ENCODE measurements at regions of chr6 and their contacts with region 1.

Region 1: DNA sequence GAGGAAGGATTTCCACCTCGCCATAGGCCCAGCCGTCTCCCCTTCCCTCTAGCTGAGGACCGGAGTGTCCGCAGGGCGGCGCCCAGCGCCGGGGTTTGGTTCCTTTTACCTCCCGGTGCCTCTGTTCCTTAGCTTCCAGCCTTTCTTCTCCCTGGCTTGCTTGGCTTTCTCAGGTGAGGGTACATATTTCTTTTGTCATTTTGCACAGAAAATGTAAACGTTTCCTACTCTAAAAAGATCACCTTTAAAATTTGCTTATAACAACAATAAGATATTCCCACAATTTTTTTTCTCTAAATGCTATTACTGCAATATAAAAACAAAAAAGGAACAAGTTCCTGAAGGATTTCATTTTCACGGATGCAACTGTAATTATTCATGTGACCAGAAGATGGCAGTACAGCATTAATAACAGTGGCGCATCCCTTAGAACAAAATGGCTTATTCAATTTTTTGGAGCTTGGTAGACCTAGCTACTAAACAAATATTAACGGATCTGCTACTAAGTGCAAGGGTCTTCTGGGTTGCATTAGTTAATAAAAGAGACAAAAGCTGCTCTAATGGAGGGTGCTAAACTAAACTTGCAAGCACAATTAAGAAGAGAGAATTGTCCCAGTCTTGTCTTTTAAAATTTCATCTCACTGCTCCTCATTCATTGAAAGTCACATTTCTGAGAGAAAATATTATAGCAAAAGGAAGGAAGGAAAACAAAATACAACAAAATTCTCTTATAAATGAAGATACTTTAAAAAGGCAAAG is 172.9 kb downstream of the ADGRG6 start:
- DNase-seq: peak; percentile 47
- H3K4me3 ChIP-seq: peak overlapping the region; percentile 12 to 37; a peak in 2 of 4 replicates
- H3K27ac ChIP-seq: peak overlapping the region; percentile 19 to 66; a peak in 3 of 4 replicates
- H3K4me1 ChIP-seq: peaks cover 0 to 2% of the 10 kb centered on the region in 2 experiments; a peak in 2 of 4 replicates
- H3K27me3 ChIP-seq: no peaks in the 10 kb centered on the region
- CTCF ChIP-seq: peak; percentile 76
- EP300 ChIP-seq: no peak
- RAD21 ChIP-seq: peak; percentile 90

Region 2: GRCh38 chr6:142313284-142313683 is 161.4 kb before region 1 on chr6:
- CTCF ChIA-PET with region 1: no interaction called
- POLR2A ChIA-PET with region 1: no interaction called
- DNase-seq: no peak
- H3K4me3 ChIP-seq: no peak overlapping the region
- H3K27ac ChIP-seq: peak overlapping the region; percentile 76 to 92
- H3K4me1 ChIP-seq: no peaks in the 10 kb centered on the region; a peak in 1 of 4 replicates
- H3K27me3 ChIP-seq: no peaks in the 10 kb centered on the region
- CTCF ChIP-seq: no peak
- EP300 ChIP-seq: 0 out of 4 replicates have a peak, but pooled peaks of 1 of the 2 experiments have one; percentile 28
- RAD21 ChIP-seq: no peak

Region 3: GRCh38 chr6:142459271-142459670 is 15.4 kb before region 1 on chr6:
- CTCF ChIA-PET with region 1: interaction called, 12 read pairs
- POLR2A ChIA-PET with region 1: no interaction called
- DNase-seq: no peak
- H3K4me3 ChIP-seq: no peak overlapping the region
- H3K27ac ChIP-seq: peak overlapping the region in 1 of 2 experiments; percentile 28; a peak in 1 of 4 replicates
- H3K4me1 ChIP-seq: no peaks in the 10 kb centered on the region
- H3K27me3 ChIP-seq: no peaks in the 10 kb centered on the region
- CTCF ChIP-seq: no peak
- EP300 ChIP-seq: no peak
- RAD21 ChIP-seq: no peak

Region 4: DNA sequence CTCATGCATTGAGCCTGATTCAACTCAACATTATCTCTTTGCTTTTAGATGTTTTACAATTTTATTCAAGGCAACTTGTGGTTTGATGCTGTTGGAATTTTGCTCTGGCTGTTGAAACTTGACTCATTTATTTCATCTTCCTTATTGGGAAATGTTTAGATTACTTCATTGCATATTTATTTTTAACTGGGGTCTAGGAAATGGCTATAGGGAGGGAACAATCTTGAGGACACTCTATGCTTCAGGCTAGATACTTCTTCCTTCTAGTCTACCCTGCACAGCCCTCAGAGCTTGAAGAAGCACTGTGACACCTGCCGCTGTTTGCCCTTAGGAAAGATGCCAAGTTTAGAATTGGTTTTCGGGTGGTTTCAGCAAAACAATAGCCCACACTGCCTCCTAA is 10.5 kb after region 1 on chr6:
- CTCF ChIA-PET with region 1: interaction called, 30 read pairs
- POLR2A ChIA-PET with region 1: no interaction called
- DNase-seq: no peak
- H3K4me3 ChIP-seq: no peak overlapping the region
- H3K27ac ChIP-seq: no peak overlapping the region
- H3K4me1 ChIP-seq: no peaks in the 10 kb centered on the region
- H3K27me3 ChIP-seq: no peaks in the 10 kb centered on the region
- CTCF ChIP-seq: no peak
- EP300 ChIP-seq: no peak
- RAD21 ChIP-seq: no peak

Region 5: DNA sequence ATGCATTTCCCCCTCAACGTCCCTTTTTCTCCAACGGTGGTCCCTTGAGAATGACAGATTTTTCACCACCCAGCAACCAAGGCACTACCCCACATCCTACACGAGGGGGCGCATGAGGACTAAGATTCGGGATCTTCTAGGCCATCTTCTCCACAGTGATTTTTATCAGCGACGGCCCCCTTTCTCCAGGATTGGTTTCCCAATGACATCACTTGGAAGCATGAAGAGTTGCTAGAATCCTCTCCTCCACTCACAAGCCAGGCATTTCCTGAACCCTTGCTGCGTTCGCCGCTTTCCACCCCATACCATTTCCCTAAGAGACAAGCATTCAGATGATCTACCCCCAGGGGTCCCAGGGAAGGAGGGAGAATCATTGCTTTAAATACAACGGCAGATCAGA is 218.2 kb after region 1 on chr6:
- CTCF ChIA-PET with region 1: interaction called, 23 read pairs
- POLR2A ChIA-PET with region 1: no interaction called
- DNase-seq: peak; percentile 61
- H3K4me3 ChIP-seq: no peak overlapping the region; a peak in 1 of 4 replicates
- H3K27ac ChIP-seq: peak overlapping the region; percentile 53 to 60; a peak in 3 of 4 replicates
- H3K4me1 ChIP-seq: peaks cover 0 to 22% of the 10 kb centered on the region in 2 experiments; a peak in 2 of 4 replicates
- H3K27me3 ChIP-seq: no peaks in the 10 kb centered on the region
- CTCF ChIP-seq: peak; percentile 89
- EP300 ChIP-seq: no peak
- RAD21 ChIP-seq: peak; percentile 98